ENCODE measurements at regions of chr14 and their contacts with region 1.

Region 1: GRCh38 chr14:96567289-96567899 is 65.2 kb downstream of the PAPOLA start:
- DNase-seq: peak; percentile 10
- H3K4me3 ChIP-seq: no peak overlapping the region
- CTCF ChIP-seq: peak; percentile 47

Region 2: DNA sequence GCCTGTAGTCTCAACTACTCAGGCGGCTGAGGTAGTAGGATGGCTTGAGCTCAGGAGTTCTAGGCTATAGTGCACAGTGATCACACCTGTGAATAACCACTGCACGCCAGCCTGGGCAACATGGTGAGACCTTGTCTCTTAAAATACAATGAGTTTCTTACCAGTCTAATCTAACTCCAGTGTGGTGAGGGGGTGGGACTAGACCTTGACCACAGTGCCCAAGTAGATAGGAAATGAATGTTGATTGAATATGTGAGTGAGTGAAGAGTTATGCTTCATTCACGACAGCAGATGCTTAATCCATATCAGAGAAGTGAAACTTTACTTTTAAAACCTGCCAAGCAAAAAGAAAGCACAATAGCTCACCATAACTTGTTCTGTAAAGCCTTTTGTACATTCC is 186.7 kb before region 1 on chr14:
- CTCF ChIA-PET with region 1: no interaction called
- POLR2A ChIA-PET with region 1: no interaction called
- DNase-seq: no peak
- H3K4me3 ChIP-seq: no peak overlapping the region
- CTCF ChIP-seq: no peak

Region 3: GRCh38 chr14:96538097-96538989 is 29.1 kb before region 1 on chr14:
- CTCF ChIA-PET with region 1: interaction called, 15 read pairs
- POLR2A ChIA-PET with region 1: no interaction called
- DNase-seq: no peak
- H3K4me3 ChIP-seq: no peak overlapping the region
- CTCF ChIP-seq: no peak

Region 4: GRCh38 chr14:96581902-96582301 is 14.5 kb after region 1 on chr14:
- CTCF ChIA-PET with region 1: interaction called, 49 read pairs
- POLR2A ChIA-PET with region 1: no interaction called
- DNase-seq: no peak
- H3K4me3 ChIP-seq: no peak overlapping the region
- CTCF ChIP-seq: no peak

Region 5: DNA sequence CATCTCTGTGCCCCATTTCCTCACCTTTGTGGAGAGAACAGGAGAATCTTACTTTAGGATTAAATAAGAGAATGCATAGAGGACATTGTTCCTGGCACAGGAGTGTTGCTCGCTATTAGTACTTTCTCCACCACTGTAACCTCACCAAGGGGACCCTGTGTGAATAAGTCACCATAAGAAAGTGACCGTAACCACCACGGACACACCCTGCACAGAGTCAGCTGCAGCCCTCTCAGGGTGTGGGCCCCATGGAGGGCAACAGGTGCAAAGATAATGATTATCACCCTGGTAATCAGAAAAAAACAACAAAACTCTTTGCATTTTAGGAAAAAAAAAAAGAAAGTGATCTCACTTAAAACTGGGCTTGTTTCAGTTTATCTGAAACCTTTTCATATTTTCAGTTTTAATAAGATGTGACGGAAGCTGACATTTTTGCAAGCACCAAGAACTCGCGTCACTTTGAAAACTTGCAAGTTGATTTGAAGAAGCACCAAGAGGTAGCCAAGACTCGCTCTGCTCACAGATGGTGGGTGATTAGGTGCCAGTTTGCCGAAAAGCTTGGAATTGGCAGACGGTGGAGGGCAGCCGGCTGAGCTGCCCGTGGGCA is 142.8 kb after region 1 on chr14:
- CTCF ChIA-PET with region 1: no interaction called
- POLR2A ChIA-PET with region 1: no interaction called
- DNase-seq: no peak
- H3K4me3 ChIP-seq: no peak overlapping the region
- CTCF ChIP-seq: no peak

Region 6: GRCh38 chr14:96735526-96735925 is 168.1 kb after region 1 on chr14:
- CTCF ChIA-PET with region 1: interaction called, 83 read pairs
- POLR2A ChIA-PET with region 1: no interaction called
- DNase-seq: no peak
- H3K4me3 ChIP-seq: no peak overlapping the region
- CTCF ChIP-seq: no peak

Region 7: GRCh38 chr14:96852823-96853422 is 285.5 kb after region 1 on chr14:
- CTCF ChIA-PET with region 1: interaction called, 40 read pairs
- POLR2A ChIA-PET with region 1: no interaction called
- DNase-seq: peak; percentile 5
- H3K4me3 ChIP-seq: no peak overlapping the region
- CTCF ChIP-seq: peak; percentile 51

Region 8: GRCh38 chr14:96874127-96874526 is 306.7 kb after region 1 on chr14:
- CTCF ChIA-PET with region 1: no interaction called
- POLR2A ChIA-PET with region 1: no interaction called
- DNase-seq: no peak
- H3K4me3 ChIP-seq: no peak overlapping the region
- CTCF ChIP-seq: no peak

Measured in AG04449 (cell line).